Activated naive CD4-positive, alpha-beta T cell treated with anti-CD3 and anti-CD28 coated beads for 36 hours (primary cell): ENCODE measurements at regions of chr3 and their contacts with region 1.

Region 1: GRCh38 chr3:56915966-56916586 is 114.3 kb upstream of the ARHGEF3 start:
- DNase-seq: peak; percentile 86
- H3K4me3 Mint-ChIP-seq: peak overlapping the region; percentile 86
- H3K27ac Mint-ChIP-seq: peak overlapping the region; percentile 92
- H3K4me1 Mint-ChIP-seq: peaks cover 72% of the 10 kb centered on the region
- H3K27me3 Mint-ChIP-seq: no peaks in the 10 kb centered on the region

Region 2: DNA sequence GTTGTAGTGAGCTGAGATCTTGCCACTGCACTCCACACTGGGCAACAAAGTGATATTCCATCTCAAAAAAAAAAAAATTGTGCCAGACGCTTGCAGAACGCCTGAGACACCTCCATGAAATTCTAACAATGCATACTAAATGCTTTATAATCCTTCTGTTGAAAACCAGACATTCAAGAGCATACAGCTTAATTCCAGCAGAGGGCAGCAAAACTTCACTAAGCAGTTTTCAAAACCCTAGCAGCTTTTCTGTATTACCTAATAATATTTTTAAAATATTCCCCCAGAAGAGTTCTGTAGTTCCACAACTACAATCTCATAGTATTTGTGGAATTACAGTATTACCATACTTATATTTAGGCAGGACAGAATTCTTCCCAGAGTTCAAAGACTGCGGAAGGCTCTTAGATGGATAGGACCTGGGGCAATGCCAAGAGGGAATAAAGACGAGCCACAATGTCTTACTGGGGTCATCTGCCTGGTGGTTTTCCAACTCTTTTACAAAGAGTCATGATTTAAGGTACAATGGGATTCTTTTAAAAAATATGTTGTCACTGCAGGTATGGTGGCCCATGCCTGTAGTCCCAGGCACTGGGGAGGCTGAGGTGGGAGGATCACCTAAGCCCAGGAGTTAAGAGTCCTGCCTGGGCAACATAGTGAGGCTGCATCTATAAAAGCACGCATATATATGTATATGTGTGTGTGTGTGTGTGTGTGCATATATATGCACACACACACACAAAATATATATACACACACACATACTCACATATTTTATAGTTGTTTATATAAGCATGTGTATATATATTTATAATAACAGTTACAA is 213.4 kb before region 1 on chr3:
- CTCF ChIA-PET with region 1: interaction called, 3 read pairs
- intact Hi-C with region 1: loop called (anchors 2 kb)
- DNase-seq: peak; percentile 70
- H3K4me3 Mint-ChIP-seq: no peak overlapping the region
- H3K27ac Mint-ChIP-seq: no peak overlapping the region
- H3K4me1 Mint-ChIP-seq: peaks cover 17% of the 10 kb centered on the region
- H3K27me3 Mint-ChIP-seq: no peaks in the 10 kb centered on the region

Region 3: GRCh38 chr3:56855856-56856512 is 60.1 kb before region 1 on chr3:
- CTCF ChIA-PET with region 1: interaction called, 3 read pairs
- intact Hi-C with region 1: loop called (anchors 1 kb)
- DNase-seq: peak; percentile 62
- H3K4me3 Mint-ChIP-seq: no peak overlapping the region
- H3K27ac Mint-ChIP-seq: no peak overlapping the region
- H3K4me1 Mint-ChIP-seq: peaks cover 45% of the 10 kb centered on the region
- H3K27me3 Mint-ChIP-seq: no peaks in the 10 kb centered on the region

Region 4: DNA sequence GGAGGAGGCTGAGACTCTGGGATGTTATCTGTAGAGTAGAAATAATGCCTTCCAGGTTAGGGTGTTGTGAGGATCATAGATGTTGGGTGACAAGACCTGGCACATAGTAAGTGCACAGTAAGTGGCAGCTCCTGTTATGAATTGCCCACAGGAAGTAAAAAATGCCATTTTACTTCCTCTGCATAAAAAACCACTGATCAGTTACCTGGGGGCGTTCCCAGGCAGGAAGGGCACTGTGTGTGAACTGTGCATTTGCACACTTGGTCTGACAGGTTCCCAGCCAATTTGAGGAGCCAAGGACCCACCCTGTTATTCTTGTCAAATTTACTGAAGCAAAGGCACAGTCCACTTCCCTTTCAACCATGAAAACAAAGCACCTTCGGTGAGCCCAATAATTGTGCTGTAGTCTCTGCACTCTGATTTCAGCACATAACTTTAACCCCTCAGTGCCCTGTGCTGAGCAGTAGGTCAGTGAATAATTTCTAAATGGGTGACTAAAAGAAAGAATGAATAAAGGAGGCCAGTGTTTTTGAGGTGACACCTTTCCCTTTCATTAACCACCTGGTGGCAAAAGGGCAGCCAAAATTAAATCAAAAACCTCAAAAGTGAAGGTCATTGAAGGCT is 28.6 kb before region 1 on chr3:
- CTCF ChIA-PET with region 1: interaction called, 14 read pairs
- intact Hi-C with region 1: loop called (anchors 2 kb)
- DNase-seq: peak; percentile 70
- H3K4me3 Mint-ChIP-seq: peak overlapping the region; percentile 25
- H3K27ac Mint-ChIP-seq: peak overlapping the region; percentile 7
- H3K4me1 Mint-ChIP-seq: peaks cover 85% of the 10 kb centered on the region
- H3K27me3 Mint-ChIP-seq: no peaks in the 10 kb centered on the region

Region 5: GRCh38 chr3:56930706-56931105 is 14.6 kb after region 1 on chr3:
- CTCF ChIA-PET with region 1: interaction called, 5 read pairs
- intact Hi-C with region 1: loop called (anchors 1 kb)
- DNase-seq: peak; percentile 60
- H3K4me3 Mint-ChIP-seq: no peak overlapping the region
- H3K27ac Mint-ChIP-seq: peak overlapping the region; percentile 81
- H3K4me1 Mint-ChIP-seq: peaks cover 65% of the 10 kb centered on the region
- H3K27me3 Mint-ChIP-seq: no peaks in the 10 kb centered on the region

Region 6: DNA sequence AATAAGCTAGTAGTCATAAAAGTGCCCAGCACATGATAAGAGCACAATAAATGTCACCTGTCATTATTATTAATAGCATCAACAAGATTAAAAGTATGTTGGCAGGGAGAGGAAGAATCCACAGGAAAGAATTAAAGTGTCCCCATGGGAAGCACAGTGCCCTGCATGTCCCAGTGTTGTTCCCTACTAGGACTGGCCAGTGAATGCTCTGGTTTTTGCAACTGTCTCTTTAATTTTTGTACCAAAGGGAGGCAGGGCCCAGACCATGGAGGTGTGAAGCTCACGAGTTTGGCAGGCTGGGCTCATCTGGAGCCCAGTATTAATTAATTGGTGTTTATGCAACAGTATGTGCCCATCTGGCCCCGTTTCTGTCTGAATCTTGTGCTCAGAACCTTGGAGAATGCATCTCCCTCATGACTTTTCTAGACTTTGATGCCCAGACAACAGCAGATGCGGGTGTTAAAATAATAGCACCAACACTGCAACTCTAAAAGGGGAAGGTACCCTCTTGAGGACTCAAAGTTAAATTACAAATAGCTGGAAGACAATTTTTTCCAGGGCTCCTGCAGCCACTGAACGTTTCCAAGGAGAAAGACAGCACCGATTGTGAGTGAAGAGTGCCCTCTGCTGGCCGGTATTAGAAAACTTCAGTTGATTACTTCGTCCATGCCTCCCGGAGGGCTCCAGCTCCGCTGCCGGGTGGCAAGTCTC is 72.5 kb after region 1 on chr3:
- CTCF ChIA-PET with region 1: interaction called, 28 read pairs
- intact Hi-C with region 1: no loop called
- DNase-seq: peak; percentile 82
- H3K4me3 Mint-ChIP-seq: no peak overlapping the region
- H3K27ac Mint-ChIP-seq: no peak overlapping the region
- H3K4me1 Mint-ChIP-seq: peaks cover 16% of the 10 kb centered on the region
- H3K27me3 Mint-ChIP-seq: peaks cover 5% of the 10 kb centered on the region